Activated CD8-positive, alpha-beta T cell treated with anti-CD3 and anti-CD28 coated beads, Interleukin-2, amount 10 ng/mL, durations not matched to agents 7 days and 5 days (primary cell): ENCODE measurements at regions of chr1 and their contacts with region 1.

Region 1: DNA sequence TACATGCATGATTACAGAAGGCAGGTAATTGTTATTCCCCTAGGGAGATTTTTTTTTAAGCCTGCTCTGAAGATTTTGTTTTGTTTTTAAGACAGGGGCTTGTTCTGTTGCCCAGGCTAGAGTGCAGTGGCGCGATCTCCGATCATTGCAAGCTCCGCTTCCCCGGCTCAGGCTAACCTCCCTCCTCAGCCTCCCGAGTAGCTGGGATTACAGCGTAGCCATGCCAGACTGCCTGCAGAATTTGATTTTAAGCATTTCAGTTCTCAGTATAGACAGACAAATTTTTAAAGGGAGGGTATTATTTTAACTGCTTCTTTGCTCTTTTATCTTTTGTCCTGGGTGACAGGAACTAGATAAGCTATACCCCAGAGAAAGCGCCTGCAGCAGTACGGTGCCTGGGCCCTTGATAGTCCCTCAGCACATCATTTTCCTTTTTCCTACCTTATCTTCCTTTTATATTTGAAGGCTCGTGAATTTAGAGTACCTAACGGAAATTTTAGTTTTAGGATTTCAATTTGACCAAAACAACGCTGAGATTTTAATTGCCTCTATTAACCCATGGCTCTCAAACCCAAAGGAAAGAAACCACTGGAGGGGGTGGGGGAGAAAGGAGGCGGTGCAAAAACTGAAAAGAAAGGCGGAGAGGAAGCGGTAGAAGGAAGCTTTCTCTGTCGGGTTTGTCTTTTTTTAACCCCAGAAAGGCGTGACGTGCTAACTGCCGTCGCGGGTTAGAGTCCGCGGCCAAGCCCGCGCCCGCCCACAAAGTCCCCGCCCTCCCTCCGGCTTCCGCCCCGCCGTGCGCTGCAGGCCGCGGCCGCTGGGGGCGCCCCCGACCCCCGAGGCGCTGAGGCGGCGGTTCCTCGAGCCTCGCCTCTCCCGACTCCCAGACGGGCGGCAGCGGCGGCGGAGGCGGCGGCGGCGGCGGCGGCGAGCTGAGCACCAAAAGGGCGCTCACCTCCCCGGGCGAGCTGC is at the start of gene EEIG2:
- DNase-seq: peak; percentile 91
- ATAC-seq: peak; percentile 81
- H3K4me3 Mint-ChIP-seq: peak within 1 kb of the TSS; percentile 97
- H3K27ac Mint-ChIP-seq: peak within 1 kb of the TSS; percentile 92
- H3K4me1 Mint-ChIP-seq: peaks cover 33% of the 10 kb centered on the region
- H3K27me3 Mint-ChIP-seq: no peaks in the 10 kb centered on the region
- total RNA-seq, gene EEIG2: 18.1 to 18.9 TPM

Region 2: DNA sequence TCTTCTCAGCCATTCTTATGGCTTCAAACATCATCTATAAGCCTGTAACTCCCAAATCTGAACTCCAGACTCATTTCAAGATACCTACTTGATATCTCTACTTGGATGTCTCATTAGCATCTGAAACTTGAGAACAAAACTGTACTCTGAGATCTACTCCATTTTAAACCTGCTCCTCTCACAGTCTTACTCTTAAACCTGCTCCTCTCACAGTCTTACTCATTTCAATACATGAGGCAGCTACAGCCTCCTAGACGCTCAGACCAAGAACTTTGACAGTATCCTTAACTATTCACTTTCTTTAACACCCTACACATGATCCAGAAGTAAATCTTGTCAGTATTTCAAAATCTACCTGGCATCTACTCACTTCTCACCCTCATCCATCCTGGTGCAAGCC is 55.1 kb before region 1 on chr1:
- CTCF ChIA-PET with region 1: interaction called, 104 read pairs
- POLR2A ChIA-PET with region 1: interaction called, 5 read pairs
- DNase-seq: no peak
- ATAC-seq: peak; percentile 43
- H3K4me3 Mint-ChIP-seq: no peak overlapping the region
- H3K27ac Mint-ChIP-seq: no peak overlapping the region
- H3K4me1 Mint-ChIP-seq: no peaks in the 10 kb centered on the region
- H3K27me3 Mint-ChIP-seq: peaks cover 43% of the 10 kb centered on the region

Region 3: DNA sequence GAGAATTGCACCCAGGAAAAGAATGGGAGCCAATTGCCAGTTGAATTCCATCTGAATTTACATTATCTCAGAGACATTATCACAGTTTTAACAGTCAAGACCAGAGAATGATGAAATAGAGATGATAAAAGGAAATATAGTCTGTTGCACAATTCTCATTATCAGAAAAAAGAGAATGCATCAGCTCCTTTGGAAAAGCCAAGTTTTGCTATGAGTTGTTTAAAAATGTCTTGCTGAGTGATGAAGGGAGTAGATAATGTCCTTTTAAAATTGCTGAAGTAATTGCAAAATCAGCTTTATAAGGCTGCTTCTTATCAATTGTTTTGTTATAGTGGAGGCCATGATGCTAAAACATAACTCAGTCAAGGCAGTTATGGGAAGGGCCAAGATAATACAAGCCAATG is 37.5 kb before region 1 on chr1:
- CTCF ChIA-PET with region 1: interaction called, 13 read pairs
- POLR2A ChIA-PET with region 1: interaction called, 3 read pairs
- DNase-seq: no peak
- ATAC-seq: no peak
- H3K4me3 Mint-ChIP-seq: no peak overlapping the region
- H3K27ac Mint-ChIP-seq: no peak overlapping the region
- H3K4me1 Mint-ChIP-seq: no peaks in the 10 kb centered on the region
- H3K27me3 Mint-ChIP-seq: peaks cover 24% of the 10 kb centered on the region

Region 4: GRCh38 chr1:108584348-108584856 is 24.9 kb after region 1 on chr1:
- CTCF ChIA-PET with region 1: interaction called, 22 read pairs
- POLR2A ChIA-PET with region 1: interaction called, 3 read pairs
- DNase-seq: no peak
- ATAC-seq: no peak
- H3K4me3 Mint-ChIP-seq: no peak overlapping the region
- H3K27ac Mint-ChIP-seq: no peak overlapping the region
- H3K4me1 Mint-ChIP-seq: peaks cover 18% of the 10 kb centered on the region
- H3K27me3 Mint-ChIP-seq: no peaks in the 10 kb centered on the region

Region 5: DNA sequence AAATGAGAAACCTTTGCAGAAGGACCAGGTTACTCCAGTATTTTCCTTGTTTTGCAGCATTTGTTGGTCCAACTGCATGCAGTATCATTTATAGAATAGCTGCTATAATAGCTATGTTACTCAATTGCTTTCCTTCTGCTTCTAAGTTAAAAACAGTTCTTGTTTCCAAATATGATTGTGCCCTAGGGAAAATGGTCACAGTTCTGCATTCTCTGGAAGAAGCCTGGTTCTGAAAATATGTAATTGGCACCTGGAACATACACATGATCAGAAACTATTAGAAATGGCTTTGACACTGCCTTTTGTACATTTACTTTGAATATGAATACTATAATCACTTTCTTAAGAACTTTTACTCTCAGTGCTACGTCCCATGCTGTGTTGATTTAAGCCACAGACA is 67.8 kb after region 1 on chr1:
- CTCF ChIA-PET with region 1: interaction called, 22 read pairs
- POLR2A ChIA-PET with region 1: no interaction called
- DNase-seq: no peak
- ATAC-seq: no peak
- H3K4me3 Mint-ChIP-seq: no peak overlapping the region
- H3K27ac Mint-ChIP-seq: no peak overlapping the region
- H3K4me1 Mint-ChIP-seq: no peaks in the 10 kb centered on the region
- H3K27me3 Mint-ChIP-seq: no peaks in the 10 kb centered on the region

Region 6: GRCh38 chr1:108661030-108661620 is 101.6 kb after region 1 on chr1 and contains the start of gene HENMT1:
- CTCF ChIA-PET with region 1: interaction called, 7 read pairs
- POLR2A ChIA-PET with region 1: interaction called, 24 read pairs
- DNase-seq: peak; percentile 84
- ATAC-seq: peak; percentile 86
- H3K4me3 Mint-ChIP-seq: peak within 1 kb of the TSS; percentile 85
- H3K27ac Mint-ChIP-seq: peak within 1 kb of the TSS; percentile 97
- H3K4me1 Mint-ChIP-seq: peaks cover 51% of the 10 kb centered on the region
- H3K27me3 Mint-ChIP-seq: no peaks in the 10 kb centered on the region
- total RNA-seq, gene HENMT1: 38.7 to 40.5 TPM

Region 7: DNA sequence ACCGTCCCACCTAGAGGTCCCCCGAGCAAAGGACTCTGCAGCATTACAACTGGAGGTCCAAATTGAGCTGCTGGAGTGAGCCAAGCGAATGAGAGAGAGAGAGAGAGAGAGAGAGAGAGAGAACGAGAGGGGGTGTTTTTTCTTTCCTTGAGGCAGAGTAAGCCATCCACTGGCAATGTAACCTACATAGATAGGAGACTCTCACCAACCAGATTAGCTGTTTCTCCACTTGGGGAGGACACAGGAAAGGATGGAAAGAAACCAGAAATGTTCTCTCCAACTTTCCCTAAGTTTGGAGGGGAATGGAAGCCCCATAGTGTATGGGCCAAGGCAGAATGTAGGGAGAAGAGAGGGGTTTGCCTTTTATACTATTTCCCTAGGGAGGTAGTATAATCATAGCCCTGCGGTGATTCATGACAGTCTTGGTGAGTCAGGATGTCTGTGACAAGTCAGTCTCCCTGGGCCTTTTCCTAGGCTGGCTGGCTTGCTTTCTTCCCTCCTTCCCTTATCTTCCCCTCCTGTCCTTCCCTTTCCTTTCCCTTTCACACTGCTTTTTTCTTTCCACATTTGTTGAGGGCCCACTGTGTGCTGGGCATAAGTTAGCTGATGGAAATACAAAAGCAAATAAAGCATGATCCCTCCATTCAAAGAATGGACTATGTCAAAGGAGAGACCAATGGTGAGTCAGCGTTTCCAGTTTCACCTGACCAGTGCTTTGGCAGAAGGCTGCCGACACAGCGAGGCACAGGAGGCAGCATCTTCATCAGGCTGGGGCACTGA is 160.3 kb after region 1 on chr1:
- CTCF ChIA-PET with region 1: no interaction called
- POLR2A ChIA-PET with region 1: no interaction called
- DNase-seq: no peak
- ATAC-seq: no peak
- H3K4me3 Mint-ChIP-seq: no peak overlapping the region
- H3K27ac Mint-ChIP-seq: no peak overlapping the region
- H3K4me1 Mint-ChIP-seq: no peaks in the 10 kb centered on the region
- H3K27me3 Mint-ChIP-seq: peaks cover 14% of the 10 kb centered on the region